HEK293T (cell line): ENCODE measurements at regions of chr11 and their contacts with region 1.

Region 1: GRCh38 chr11:123103326-123103980 is 41.5 kb upstream of the HSPA8 start:
- DNase-seq: peak; percentile 62

Region 2: GRCh38 chr11:123091506-123091905 is 11.9 kb before region 1 on chr11:
- CTCF ChIA-PET with region 1: interaction called, 11 read pairs
- POLR2A ChIA-PET with region 1: no interaction called
- DNase-seq: no peak

Region 3: DNA sequence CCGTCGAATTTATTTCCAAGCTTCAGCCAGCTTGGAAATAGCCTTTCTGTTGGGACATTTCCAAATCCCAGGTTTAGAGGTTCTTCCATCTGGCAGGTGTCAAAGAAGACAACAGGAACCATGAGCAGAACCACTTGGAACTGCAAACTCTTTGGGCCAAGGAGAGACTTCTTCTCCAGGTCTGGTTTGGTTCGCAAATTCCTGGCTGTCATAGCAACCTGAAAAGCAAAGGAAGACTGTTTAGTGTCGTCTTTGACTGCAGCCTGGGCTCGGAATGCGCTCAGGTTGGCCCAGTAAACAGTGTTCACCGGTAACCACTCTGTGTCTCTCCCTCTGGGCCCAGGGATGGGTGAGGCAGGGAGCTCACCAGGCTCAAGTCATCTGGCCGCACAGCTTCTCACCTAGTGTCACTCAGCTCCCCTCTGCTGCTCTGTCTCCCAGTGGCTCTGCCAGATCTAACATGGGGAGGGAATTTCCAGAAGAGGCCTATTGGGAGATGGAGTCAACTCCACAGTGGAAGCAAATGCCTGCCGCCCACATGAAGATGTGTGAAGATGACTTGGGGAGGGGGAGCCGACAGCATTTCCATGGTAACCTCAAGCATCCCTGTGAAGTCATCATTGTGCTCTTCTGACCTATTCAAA is 103.5 kb after region 1 on chr11:
- CTCF ChIA-PET with region 1: no interaction called
- POLR2A ChIA-PET with region 1: no interaction called
- DNase-seq: no peak